A673 (cell line): ENCODE measurements at regions of chr16 and their contacts with region 1.

Region 1: GRCh38 chr16:83737729-83738354 is 69.9 kb upstream of the HSBP1 start:
- DNase-seq: no peak
- H3K4me3 ChIP-seq: no peak overlapping the region
- H3K27ac ChIP-seq: no peak overlapping the region
- H3K4me1 ChIP-seq: no peaks in the 10 kb centered on the region
- H3K27me3 ChIP-seq: peaks cover 38% of the 10 kb centered on the region
- CTCF ChIP-seq: no peak

Region 2: DNA sequence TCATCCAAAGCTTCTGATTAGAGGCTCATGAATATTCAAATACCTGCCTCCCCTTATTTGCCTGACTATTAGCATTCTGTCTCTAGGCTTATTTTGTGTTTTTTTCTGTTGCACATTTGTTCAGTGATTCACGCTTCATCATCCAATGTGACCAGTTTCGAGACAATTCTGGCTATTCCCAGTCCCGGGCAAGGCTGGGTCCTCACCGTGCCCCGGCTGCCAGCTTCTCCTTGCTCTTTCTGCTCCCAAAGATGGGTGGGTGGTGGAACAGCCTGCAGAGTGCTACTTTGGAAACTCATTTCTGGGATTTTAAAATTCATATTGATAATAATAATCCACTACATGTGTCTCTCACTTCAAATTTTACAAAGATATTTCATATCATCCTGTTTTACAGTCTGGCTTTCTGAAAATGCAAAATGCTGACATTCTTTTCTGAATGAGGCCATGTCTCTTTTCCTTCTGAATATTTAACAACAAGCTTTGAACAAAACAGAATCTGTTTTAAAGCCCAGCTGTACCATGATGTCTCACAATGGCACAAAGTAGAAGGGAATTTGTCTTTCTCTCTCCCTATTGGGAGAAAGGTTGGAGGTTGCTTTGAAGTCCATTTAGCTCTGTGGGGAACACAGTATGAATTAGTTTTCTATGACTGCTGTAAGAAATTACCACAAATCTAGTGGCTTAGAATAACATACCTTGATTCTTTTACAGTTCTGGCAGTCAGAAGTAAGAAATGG is 1228.0 kb before region 1 on chr16:
- CTCF ChIA-PET with region 1: no interaction called
- POLR2A ChIA-PET with region 1: interaction called, 14 read pairs
- intact Hi-C with region 1: no loop called
- DNase-seq: no peak
- H3K4me3 ChIP-seq: no peak overlapping the region
- H3K27ac ChIP-seq: no peak overlapping the region
- H3K4me1 ChIP-seq: no peaks in the 10 kb centered on the region
- H3K27me3 ChIP-seq: peaks cover 12% of the 10 kb centered on the region
- CTCF ChIP-seq: no peak

Region 3: DNA sequence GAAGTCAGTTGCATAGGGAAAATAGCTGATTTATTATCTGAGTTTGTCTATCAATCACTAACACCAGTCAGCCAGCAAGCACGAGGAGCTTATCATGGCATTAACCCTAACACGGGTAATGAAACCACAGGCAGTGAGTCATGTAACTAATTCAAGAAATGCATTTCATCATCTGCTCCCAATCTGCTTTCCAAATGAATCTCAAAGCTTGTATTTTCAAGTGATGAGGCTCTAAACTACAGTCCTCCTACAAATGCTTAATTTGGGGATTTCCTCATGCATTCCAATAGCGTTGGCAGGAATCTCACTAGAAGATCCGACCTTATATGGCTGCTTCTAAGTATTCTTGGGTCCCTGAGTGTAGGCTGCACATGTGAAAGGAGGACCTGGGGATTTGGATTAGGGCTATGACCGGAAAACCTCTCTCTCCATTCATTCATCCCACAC is 48.4 kb before region 1 on chr16:
- CTCF ChIA-PET with region 1: no interaction called
- POLR2A ChIA-PET with region 1: no interaction called
- intact Hi-C with region 1: no loop called
- DNase-seq: peak; percentile 58
- H3K4me3 ChIP-seq: no peak overlapping the region
- H3K27ac ChIP-seq: no peak overlapping the region
- H3K4me1 ChIP-seq: no peaks in the 10 kb centered on the region
- H3K27me3 ChIP-seq: peaks cover 23% of the 10 kb centered on the region
- CTCF ChIP-seq: no peak